ENCODE measurements at regions of chr1 and their contacts with region 1.

Region 1: DNA sequence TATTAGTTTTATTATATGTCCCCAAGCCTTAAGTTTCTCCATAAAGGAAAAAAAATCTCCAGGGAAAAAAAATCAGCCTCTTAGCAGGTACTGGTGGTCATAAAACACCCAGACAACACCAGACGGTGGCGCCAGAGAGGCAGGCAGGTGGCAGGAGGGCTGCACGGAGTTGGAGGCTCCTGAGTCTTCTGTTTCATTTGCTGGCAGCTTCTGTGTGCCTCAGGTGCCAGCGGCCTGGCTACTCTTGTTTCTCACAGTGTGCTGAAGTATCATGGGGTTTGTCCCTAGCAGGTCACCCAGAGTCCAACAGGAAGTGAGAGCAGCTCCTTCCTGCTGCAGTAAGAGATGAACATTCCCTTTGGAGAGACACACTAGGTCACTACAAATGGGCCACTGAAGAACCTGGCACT is 123.3 kb upstream of the GADD45A start:
- DNase-seq: peak; percentile 96
- H3K4me3 Mint-ChIP-seq: no peak overlapping the region
- H3K27ac Mint-ChIP-seq: no peak overlapping the region
- H3K4me1 Mint-ChIP-seq: no peaks in the 10 kb centered on the region
- H3K27me3 Mint-ChIP-seq: no peaks in the 10 kb centered on the region

Region 2: GRCh38 chr1:67535474-67535873 is 26.2 kb before region 1 on chr1:
- CTCF ChIA-PET with region 1: interaction called, 8 read pairs
- intact Hi-C with region 1: loop called (anchors 1 kb)
- DNase-seq: peak; percentile 81
- H3K4me3 Mint-ChIP-seq: no peak overlapping the region
- H3K27ac Mint-ChIP-seq: no peak overlapping the region
- H3K4me1 Mint-ChIP-seq: no peaks in the 10 kb centered on the region
- H3K27me3 Mint-ChIP-seq: peaks cover 4% of the 10 kb centered on the region

Region 3: GRCh38 chr1:67753776-67754525 is 192.2 kb after region 1 on chr1:
- CTCF ChIA-PET with region 1: interaction called, 164 read pairs
- intact Hi-C with region 1: no loop called
- DNase-seq: peak; percentile 39
- H3K4me3 Mint-ChIP-seq: no peak overlapping the region
- H3K27ac Mint-ChIP-seq: no peak overlapping the region
- H3K4me1 Mint-ChIP-seq: peaks cover 10% of the 10 kb centered on the region
- H3K27me3 Mint-ChIP-seq: no peaks in the 10 kb centered on the region